CD4-positive, alpha-beta memory T cell (primary cell): ENCODE measurements at regions of chr1 and their contacts with region 1.

Region 1: GRCh38 chr1:36342481-36343478 is 19.3 kb upstream of the EVA1B start:
- DNase-seq: peak in 4 of 5 donors; percentile 53 to 65 (median 58)
- H3K4me3 ChIP-seq: no peak overlapping the region
- H3K4me3 Mint-ChIP-seq: peak overlapping the region in 1 of 8 donors; percentile 35
- H3K27ac ChIP-seq: no peak overlapping the region
- H3K27ac Mint-ChIP-seq: peak overlapping the region in 5 of 7 donors; percentile 33 to 78 (median 43)
- H3K4me1 ChIP-seq: peaks cover 16% of the 10 kb centered on the region
- H3K4me1 Mint-ChIP-seq: peaks cover 6 to 51% (median 19%) of the 10 kb centered on the region in 4 donors
- H3K27me3 ChIP-seq: no peaks in the 10 kb centered on the region
- H3K27me3 Mint-ChIP-seq: no peaks in the 10 kb centered on the region

Region 2: GRCh38 chr1:35935442-35936388 is 407.1 kb before region 1 on chr1:
- CTCF ChIA-PET with region 1: no interaction called
- POLR2A ChIA-PET with region 1: no interaction called
- intact Hi-C with region 1: no loop called
- DNase-seq: no peak
- H3K4me3 ChIP-seq: no peak overlapping the region
- H3K4me3 Mint-ChIP-seq: no peak overlapping the region
- H3K27ac ChIP-seq: no peak overlapping the region
- H3K27ac Mint-ChIP-seq: no peak overlapping the region
- H3K4me1 ChIP-seq: peaks cover 24% of the 10 kb centered on the region
- H3K4me1 Mint-ChIP-seq: peaks cover 25 to 48% (median 32%) of the 10 kb centered on the region in 4 donors
- H3K27me3 ChIP-seq: no peaks in the 10 kb centered on the region
- H3K27me3 Mint-ChIP-seq: no peaks in the 10 kb centered on the region

Region 3: DNA sequence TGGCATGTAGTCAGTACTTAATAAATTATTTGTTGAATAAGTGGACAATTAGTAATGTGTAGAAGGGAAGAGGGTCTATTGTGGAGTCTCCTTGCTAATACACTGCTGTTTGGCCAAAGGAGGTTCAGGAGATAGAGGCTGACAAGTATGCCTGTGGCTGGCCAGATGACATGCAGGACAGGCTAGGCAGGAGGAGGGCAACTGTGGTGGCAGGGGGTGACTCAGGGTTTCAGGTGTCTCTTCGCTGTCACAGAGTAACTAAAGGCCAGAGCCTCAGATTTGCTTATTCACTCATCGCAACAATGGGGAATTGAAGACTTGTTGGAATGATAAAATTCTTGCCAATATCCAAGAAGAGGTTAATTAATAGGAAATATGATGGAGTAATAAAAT is 85.4 kb before region 1 on chr1:
- CTCF ChIA-PET with region 1: no interaction called
- POLR2A ChIA-PET with region 1: no interaction called
- intact Hi-C with region 1: no loop called
- DNase-seq: no peak
- H3K4me3 ChIP-seq: no peak overlapping the region
- H3K4me3 Mint-ChIP-seq: no peak overlapping the region
- H3K27ac ChIP-seq: no peak overlapping the region
- H3K27ac Mint-ChIP-seq: peak overlapping the region in 3 of 7 donors; percentile 8 to 72 (median 53)
- H3K4me1 ChIP-seq: peaks cover 19% of the 10 kb centered on the region
- H3K4me1 Mint-ChIP-seq: peaks cover 24 to 48% (median 36%) of the 10 kb centered on the region in 4 donors
- H3K27me3 ChIP-seq: no peaks in the 10 kb centered on the region
- H3K27me3 Mint-ChIP-seq: no peaks in the 10 kb centered on the region

Region 4: GRCh38 chr1:36359911-36360550 is 17.3 kb after region 1 on chr1:
- CTCF ChIA-PET with region 1: interaction called, 22 read pairs
- POLR2A ChIA-PET with region 1: interaction called, 73 read pairs
- intact Hi-C with region 1: no loop called
- DNase-seq: peak; percentile 25 to 74 (median 51)
- H3K4me3 ChIP-seq: no peak overlapping the region
- H3K4me3 Mint-ChIP-seq: peak overlapping the region in 5 of 8 donors; percentile 2 to 70 (median 53)
- H3K27ac ChIP-seq: peak overlapping the region; percentile 25
- H3K27ac Mint-ChIP-seq: peak overlapping the region; percentile 81 to 96 (median 92)
- H3K4me1 ChIP-seq: peaks cover 13% of the 10 kb centered on the region
- H3K4me1 Mint-ChIP-seq: peaks cover 6 to 40% (median 10%) of the 10 kb centered on the region in 4 donors
- H3K27me3 ChIP-seq: no peaks in the 10 kb centered on the region
- H3K27me3 Mint-ChIP-seq: no peaks in the 10 kb centered on the region

Region 5: DNA sequence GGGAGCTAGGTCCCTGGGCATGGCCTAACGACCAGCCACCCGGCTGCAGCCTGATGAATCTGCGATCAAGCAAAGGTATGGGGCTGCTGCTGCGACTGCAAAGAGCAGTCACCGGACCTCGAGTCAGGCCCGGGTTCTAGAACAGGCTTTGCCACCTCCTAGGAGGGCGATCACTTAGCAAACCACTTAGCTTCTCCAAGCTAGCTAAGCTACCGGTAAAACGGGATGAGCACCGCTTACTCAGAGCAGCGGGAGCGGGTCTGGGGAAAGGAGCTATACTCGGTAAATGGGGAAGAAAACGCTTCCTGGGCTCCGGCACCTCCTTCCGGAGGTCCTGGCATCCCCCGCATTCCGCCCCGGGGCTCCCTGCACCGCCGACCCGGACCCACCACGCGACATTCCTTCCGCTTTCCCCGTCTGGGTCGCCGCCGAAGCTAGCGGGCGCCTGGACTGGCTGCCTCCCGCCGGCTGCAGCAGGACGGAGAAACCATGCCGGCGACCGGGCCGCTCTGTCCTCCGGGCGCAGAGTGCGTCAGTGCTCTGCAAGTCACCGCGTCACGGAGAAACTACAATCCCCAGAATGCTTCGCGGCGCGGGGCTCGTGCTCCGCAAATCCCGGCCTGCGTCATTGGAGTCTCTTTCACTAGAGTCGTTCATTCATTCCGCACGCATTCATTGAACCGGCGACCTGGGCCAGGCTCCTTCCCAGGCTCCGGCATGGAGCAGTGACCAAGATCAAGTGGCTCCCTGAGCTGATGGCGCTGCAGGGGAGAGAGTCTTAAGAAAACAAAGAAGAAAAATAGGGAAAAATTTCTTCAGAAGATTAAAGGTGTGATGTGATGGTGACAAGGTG is 54.8 kb after region 1 on chr1 and contains the start of gene LSM10:
- CTCF ChIA-PET with region 1: interaction called, 23 read pairs
- POLR2A ChIA-PET with region 1: interaction called, 4 read pairs
- intact Hi-C with region 1: no loop called
- DNase-seq: peak; percentile 85 to 94 (median 86)
- H3K4me3 ChIP-seq: peak within 1 kb of the TSS; percentile 90 to 97
- H3K4me3 Mint-ChIP-seq: peak within 1 kb of the TSS; percentile 95 to 99 (median 98)
- H3K27ac ChIP-seq: peak within 1 kb of the TSS; percentile 90
- H3K27ac Mint-ChIP-seq: peak within 1 kb of the TSS; percentile 89 to 100 (median 98)
- H3K4me1 ChIP-seq: peaks cover 20% of the 10 kb centered on the region
- H3K4me1 Mint-ChIP-seq: peaks cover 13 to 41% (median 26%) of the 10 kb centered on the region in 4 donors
- H3K27me3 ChIP-seq: no peaks in the 10 kb centered on the region
- H3K27me3 Mint-ChIP-seq: no peaks in the 10 kb centered on the region
- total RNA-seq, gene LSM10: 51.0 to 53.0 TPM

Region 6: DNA sequence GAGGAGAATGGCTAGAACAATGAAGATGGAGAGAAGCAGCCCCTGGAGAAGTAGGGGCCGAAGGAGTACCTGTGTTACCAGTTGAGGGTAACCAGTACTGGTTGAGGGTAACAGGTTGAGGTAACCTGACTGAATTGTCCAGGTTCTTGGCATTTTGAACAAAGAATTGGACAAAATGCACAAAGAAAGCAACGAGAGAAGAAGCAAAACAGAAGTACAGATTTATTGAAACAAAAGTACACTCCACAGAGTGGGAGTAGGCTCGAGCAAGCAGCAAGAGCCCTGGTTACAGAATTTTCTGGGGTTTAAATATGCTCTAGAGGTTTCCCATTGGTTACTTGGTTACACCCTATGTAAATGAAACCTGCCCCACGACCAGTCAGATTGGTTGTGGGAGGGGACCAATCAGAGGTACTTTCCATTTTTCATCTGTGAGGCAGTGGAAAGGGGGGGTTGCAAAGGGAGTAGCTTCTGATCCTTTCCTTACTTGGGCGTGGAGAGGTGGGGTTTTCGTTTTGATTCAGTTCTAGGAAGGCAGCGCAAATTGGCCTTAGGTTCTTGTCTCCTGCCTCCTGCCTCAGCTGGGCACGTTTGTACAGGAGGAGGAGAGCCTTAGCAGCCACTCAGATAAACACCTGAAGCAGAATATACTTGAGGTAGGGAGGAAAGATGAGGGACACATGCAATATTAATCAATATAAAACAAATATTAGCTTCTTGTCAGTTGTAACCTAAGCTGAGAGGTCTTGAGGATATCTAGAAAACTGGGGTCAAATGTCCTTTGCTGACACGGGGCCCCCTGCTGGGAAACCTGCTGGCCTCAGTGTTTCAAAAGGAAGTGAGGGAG is 69.1 kb after region 1 on chr1:
- CTCF ChIA-PET with region 1: interaction called, 88 read pairs
- POLR2A ChIA-PET with region 1: interaction called, 3 read pairs
- intact Hi-C with region 1: no loop called
- DNase-seq: peak; percentile 37 to 80 (median 41)
- H3K4me3 ChIP-seq: no peak overlapping the region
- H3K4me3 Mint-ChIP-seq: peak overlapping the region in 7 of 8 donors; percentile 21 to 76 (median 51)
- H3K27ac ChIP-seq: no peak overlapping the region
- H3K27ac Mint-ChIP-seq: peak overlapping the region in 6 of 7 donors; percentile 27 to 93 (median 88)
- H3K4me1 ChIP-seq: peaks cover 9% of the 10 kb centered on the region
- H3K4me1 Mint-ChIP-seq: peaks cover 5 to 13% (median 11%) of the 10 kb centered on the region in 4 donors
- H3K27me3 ChIP-seq: no peaks in the 10 kb centered on the region
- H3K27me3 Mint-ChIP-seq: no peaks in the 10 kb centered on the region